Dendritic cell treated with granulocyte-macrophage colony-stimulating factor and Interleukin-4, amounts not matched to agents 40 ng/mL and 50 ng/mL, for 4 days (primary cell): ENCODE measurements at regions of chr5 and their contacts with region 1.

Region 1: DNA sequence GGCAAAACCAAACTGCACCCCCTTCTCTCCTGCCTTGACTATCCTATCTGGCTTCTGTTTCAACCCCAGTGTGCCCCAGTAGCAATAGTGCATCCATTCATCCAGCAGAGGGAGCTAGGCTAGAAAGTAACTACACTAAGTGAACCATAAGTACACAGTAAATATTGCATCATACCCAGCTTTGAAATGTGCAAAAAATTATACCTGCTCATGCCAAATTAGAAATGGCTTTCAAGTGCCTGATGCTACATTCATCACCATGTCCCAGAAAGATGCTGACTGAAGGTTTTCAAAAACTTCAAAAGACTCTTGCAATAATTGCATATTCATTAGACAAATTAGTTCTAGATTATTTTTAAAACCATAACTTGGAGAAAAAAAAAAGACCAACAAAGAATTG is 153.5 kb downstream of the PRELID2 start:
- H3K4me3 Mint-ChIP-seq: no peak overlapping the region
- H3K27ac Mint-ChIP-seq: no peak overlapping the region
- H3K4me1 Mint-ChIP-seq: peaks cover 27% of the 10 kb centered on the region
- H3K27me3 Mint-ChIP-seq: no peaks in the 10 kb centered on the region

Region 2: GRCh38 chr5:144203750-144204596 is 1477.7 kb before region 1 on chr5:
- intact Hi-C with region 1: loop called (anchors 5 kb)
- H3K4me3 Mint-ChIP-seq: no peak overlapping the region
- H3K27ac Mint-ChIP-seq: no peak overlapping the region
- H3K4me1 Mint-ChIP-seq: peaks cover 5% of the 10 kb centered on the region
- H3K27me3 Mint-ChIP-seq: peaks cover 34% of the 10 kb centered on the region

Region 3: GRCh38 chr5:145463635-145464034 is 218.1 kb before region 1 on chr5:
- intact Hi-C with region 1: no loop called
- H3K4me3 Mint-ChIP-seq: no peak overlapping the region
- H3K27ac Mint-ChIP-seq: no peak overlapping the region
- H3K4me1 Mint-ChIP-seq: no peaks in the 10 kb centered on the region
- H3K27me3 Mint-ChIP-seq: no peaks in the 10 kb centered on the region

Region 4: GRCh38 chr5:145718956-145719355 is 37.3 kb after region 1 on chr5:
- intact Hi-C with region 1: loop called (anchors 5 kb)
- H3K4me3 Mint-ChIP-seq: no peak overlapping the region
- H3K27ac Mint-ChIP-seq: no peak overlapping the region
- H3K4me1 Mint-ChIP-seq: no peaks in the 10 kb centered on the region
- H3K27me3 Mint-ChIP-seq: no peaks in the 10 kb centered on the region

Region 5: GRCh38 chr5:145825751-145826180 is 144.1 kb after region 1 on chr5:
- intact Hi-C with region 1: loop called (anchors 1 kb)
- H3K4me3 Mint-ChIP-seq: no peak overlapping the region
- H3K27ac Mint-ChIP-seq: no peak overlapping the region
- H3K4me1 Mint-ChIP-seq: no peaks in the 10 kb centered on the region
- H3K27me3 Mint-ChIP-seq: no peaks in the 10 kb centered on the region

Region 6: DNA sequence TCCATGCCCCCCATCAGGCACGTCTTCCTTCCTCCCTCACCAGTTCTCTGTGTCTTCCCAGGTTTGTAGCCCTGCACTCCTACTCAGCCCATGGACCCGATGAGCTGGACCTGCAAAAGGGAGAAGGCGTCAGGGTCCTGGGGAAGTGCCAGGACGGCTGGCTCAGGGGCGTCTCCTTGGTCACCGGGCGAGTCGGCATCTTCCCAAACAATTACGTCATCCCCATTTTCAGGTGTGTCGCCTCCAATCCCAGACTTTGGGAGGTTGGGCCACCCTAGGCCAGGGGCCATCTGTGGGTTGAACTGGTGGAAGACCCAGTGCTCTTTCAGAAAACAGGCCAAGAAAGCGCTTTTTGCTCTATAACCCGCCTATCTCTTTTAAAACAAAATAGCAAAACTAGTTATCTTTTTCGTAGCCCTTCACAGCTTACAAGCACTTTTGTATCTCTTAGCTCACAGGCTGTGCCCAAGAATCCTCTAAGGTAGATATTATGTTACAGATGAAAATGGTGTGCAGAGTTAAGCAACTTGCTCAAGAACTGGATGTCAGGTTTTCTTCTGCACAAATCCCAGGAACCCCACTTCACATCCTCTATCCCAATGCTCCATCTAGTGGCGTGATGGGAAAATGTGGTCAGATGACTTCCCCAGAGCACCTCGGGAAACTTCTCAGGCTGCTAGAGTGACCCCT is 367.5 kb after region 1 on chr5:
- intact Hi-C with region 1: loop called (anchors 5 kb)
- H3K4me3 Mint-ChIP-seq: no peak overlapping the region
- H3K27ac Mint-ChIP-seq: peak overlapping the region; percentile 0
- H3K4me1 Mint-ChIP-seq: no peaks in the 10 kb centered on the region
- H3K27me3 Mint-ChIP-seq: no peaks in the 10 kb centered on the region

Region 7: GRCh38 chr5:146203011-146203871 is 521.6 kb after region 1 on chr5 and contains the start of gene RBM27:
- intact Hi-C with region 1: loop called (anchors 10 kb)
- H3K4me3 Mint-ChIP-seq: no peak within 1 kb of the TSS
- H3K27ac Mint-ChIP-seq: no peak within 1 kb of the TSS
- H3K4me1 Mint-ChIP-seq: no peaks in the 10 kb centered on the region
- H3K27me3 Mint-ChIP-seq: no peaks in the 10 kb centered on the region